ENCODE measurements at regions of chr10 and their contacts with region 1.

Region 1: DNA sequence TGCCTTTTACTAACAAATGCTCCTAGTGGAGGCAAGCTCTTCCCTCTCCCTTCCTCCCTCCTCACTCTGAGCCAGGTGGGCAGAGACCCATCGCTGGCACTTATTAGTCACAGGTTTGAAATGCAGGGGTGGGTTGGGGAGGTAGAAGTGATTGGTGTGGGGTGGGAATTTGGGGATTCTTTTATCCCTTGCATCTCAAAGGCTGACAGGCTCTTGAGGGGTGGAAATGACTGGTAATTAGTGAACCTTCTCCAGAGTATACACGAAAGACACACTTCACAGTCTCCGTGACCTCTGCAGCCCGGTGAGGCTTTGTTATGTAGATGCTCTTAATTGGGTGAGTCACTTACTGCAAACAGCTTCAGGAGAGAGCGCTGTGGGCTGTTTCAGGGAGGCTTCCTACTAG is 13.9 kb upstream of the LRMDA start:
- DNase-seq: no peak
- ATAC-seq: no peak
- H3K4me3 ChIP-seq: no peak overlapping the region
- H3K27ac ChIP-seq: no peak overlapping the region
- H3K4me1 ChIP-seq: no peaks in the 10 kb centered on the region
- H3K27me3 ChIP-seq: no peaks in the 10 kb centered on the region
- CTCF ChIP-seq: no peak
- POLR2A ChIP-seq: no peak

Region 2: GRCh38 chr10:75772153-75772887 is 354.8 kb after region 1 on chr10:
- intact Hi-C with region 1: loop called (anchors 10 kb)
- DNase-seq: peak in 1 of 4 donors; percentile 40
- ATAC-seq: no peak
- H3K4me3 ChIP-seq: no peak overlapping the region
- H3K27ac ChIP-seq: peak overlapping the region; percentile 40 to 75 (median 74)
- H3K4me1 ChIP-seq: peaks cover 51% of the 10 kb centered on the region
- H3K27me3 ChIP-seq: no peaks in the 10 kb centered on the region
- CTCF ChIP-seq: no peak
- POLR2A ChIP-seq: no peak

Region 3: GRCh38 chr10:75910032-75910431 is 492.5 kb after region 1 on chr10:
- intact Hi-C with region 1: loop called (anchors 10 kb)
- DNase-seq: peak in 1 of 4 donors; percentile 27
- ATAC-seq: no peak
- H3K4me3 ChIP-seq: no peak overlapping the region
- H3K27ac ChIP-seq: no peak overlapping the region
- H3K4me1 ChIP-seq: no peaks in the 10 kb centered on the region
- H3K27me3 ChIP-seq: no peaks in the 10 kb centered on the region
- CTCF ChIP-seq: peak in 6 of 7 experiments; percentile 54 to 75 (median 70)
- POLR2A ChIP-seq: no peak